CD4-positive, alpha-beta T cell (primary cell): ENCODE measurements at regions of chr14 and their contacts with region 1.

Region 1: GRCh38 chr14:57737598-57737997 is 128.3 kb downstream of the SLC35F4 start:
- DNase-seq: no peak
- ATAC-seq: no peak
- H3K4me3 ChIP-seq: no peak overlapping the region
- H3K4me3 Mint-ChIP-seq: no peak overlapping the region
- H3K27ac ChIP-seq: no peak overlapping the region
- H3K27ac Mint-ChIP-seq: no peak overlapping the region
- H3K4me1 ChIP-seq: no peaks in the 10 kb centered on the region
- H3K4me1 Mint-ChIP-seq: no peaks in the 10 kb centered on the region
- H3K27me3 ChIP-seq: no peaks in the 10 kb centered on the region
- H3K27me3 Mint-ChIP-seq: no peaks in the 10 kb centered on the region
- CTCF ChIP-seq: no peak

Region 2: GRCh38 chr14:57749267-57749666 is 11.7 kb after region 1 on chr14:
- CTCF ChIA-PET with region 1: no interaction called
- POLR2A ChIA-PET with region 1: no interaction called
- intact Hi-C with region 1: no loop called
- DNase-seq: no peak
- ATAC-seq: no peak
- H3K4me3 ChIP-seq: no peak overlapping the region
- H3K4me3 Mint-ChIP-seq: no peak overlapping the region
- H3K27ac ChIP-seq: no peak overlapping the region
- H3K27ac Mint-ChIP-seq: no peak overlapping the region
- H3K4me1 ChIP-seq: no peaks in the 10 kb centered on the region
- H3K4me1 Mint-ChIP-seq: no peaks in the 10 kb centered on the region
- H3K27me3 ChIP-seq: no peaks in the 10 kb centered on the region
- H3K27me3 Mint-ChIP-seq: no peaks in the 10 kb centered on the region
- CTCF ChIP-seq: no peak

Region 3: GRCh38 chr14:57769863-57770523 is 32.4 kb after region 1 on chr14:
- CTCF ChIA-PET with region 1: no interaction called
- POLR2A ChIA-PET with region 1: no interaction called
- intact Hi-C with region 1: loop called in 1 of 2 experiments (anchors 1 kb)
- DNase-seq: no peak
- ATAC-seq: no peak
- H3K4me3 ChIP-seq: no peak overlapping the region
- H3K4me3 Mint-ChIP-seq: no peak overlapping the region
- H3K27ac ChIP-seq: no peak overlapping the region
- H3K27ac Mint-ChIP-seq: no peak overlapping the region
- H3K4me1 ChIP-seq: no peaks in the 10 kb centered on the region
- H3K4me1 Mint-ChIP-seq: no peaks in the 10 kb centered on the region
- H3K27me3 ChIP-seq: no peaks in the 10 kb centered on the region
- H3K27me3 Mint-ChIP-seq: no peaks in the 10 kb centered on the region
- CTCF ChIP-seq: no peak